PC-3 (cell line): ENCODE measurements at regions of chr5 and their contacts with region 1.

Region 1: GRCh38 chr5:149828161-149828884 is 98.2 kb downstream of the PPARGC1B start:
- DNase-seq: peak; percentile 97
- ATAC-seq: peak; percentile 95
- H3K4me3 ChIP-seq: no peak overlapping the region
- H3K27ac ChIP-seq: no peak overlapping the region
- H3K4me1 ChIP-seq: no peaks in the 10 kb centered on the region
- H3K27me3 ChIP-seq: no peaks in the 10 kb centered on the region
- CTCF ChIP-seq: peak; percentile 99

Region 2: GRCh38 chr5:149636851-149637246 is 191.5 kb before region 1 on chr5:
- CTCF ChIA-PET with region 1: interaction called, 19 read pairs
- POLR2A ChIA-PET with region 1: interaction called, 4 read pairs
- intact Hi-C with region 1: loop called (anchors 1 kb)
- DNase-seq: peak; percentile 98
- ATAC-seq: peak; percentile 85
- H3K4me3 ChIP-seq: no peak overlapping the region
- H3K27ac ChIP-seq: no peak overlapping the region
- H3K4me1 ChIP-seq: peaks cover 26% of the 10 kb centered on the region
- H3K27me3 ChIP-seq: no peaks in the 10 kb centered on the region
- CTCF ChIP-seq: peak; percentile 100

Region 3: DNA sequence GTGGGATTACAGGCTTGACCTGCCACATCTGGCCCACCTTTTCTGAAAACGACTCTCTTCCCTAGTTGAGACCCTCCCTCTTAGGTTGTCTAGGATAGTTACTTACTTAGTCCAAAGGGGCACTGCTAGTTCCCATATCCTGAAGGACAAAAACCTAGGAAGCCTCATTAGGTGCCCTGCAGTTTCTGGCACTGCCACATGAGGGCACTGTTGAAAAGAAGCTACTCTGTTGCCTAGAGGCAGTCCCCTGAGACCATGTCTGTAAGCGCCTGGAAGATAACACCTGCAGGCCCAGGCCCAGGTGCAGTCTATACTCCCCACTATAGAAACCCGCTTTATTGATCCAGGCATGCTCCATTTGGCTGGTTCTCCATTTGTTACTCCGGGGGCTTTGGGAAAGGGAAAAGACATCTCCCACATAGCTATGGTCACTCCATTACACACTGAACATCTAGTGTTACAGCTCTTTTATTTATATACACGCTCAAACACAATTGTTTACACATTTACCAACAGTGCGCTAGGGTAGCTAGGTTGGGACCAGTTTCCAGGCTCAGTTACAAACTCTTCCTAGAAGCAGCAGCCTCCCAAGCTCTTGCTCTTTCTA is 171.6 kb before region 1 on chr5:
- CTCF ChIA-PET with region 1: interaction called, 6 read pairs
- POLR2A ChIA-PET with region 1: no interaction called
- intact Hi-C with region 1: loop called (anchors 1 kb)
- DNase-seq: peak; percentile 83
- ATAC-seq: peak; percentile 52
- H3K4me3 ChIP-seq: no peak overlapping the region
- H3K27ac ChIP-seq: no peak overlapping the region
- H3K4me1 ChIP-seq: no peaks in the 10 kb centered on the region
- H3K27me3 ChIP-seq: no peaks in the 10 kb centered on the region
- CTCF ChIP-seq: peak; percentile 98

Region 4: GRCh38 chr5:149667084-149667828 is 161.1 kb before region 1 on chr5:
- CTCF ChIA-PET with region 1: interaction called, 6 read pairs
- POLR2A ChIA-PET with region 1: no interaction called
- intact Hi-C with region 1: loop called (anchors 1 kb)
- DNase-seq: peak; percentile 79
- ATAC-seq: peak; percentile 47
- H3K4me3 ChIP-seq: no peak overlapping the region
- H3K27ac ChIP-seq: no peak overlapping the region
- H3K4me1 ChIP-seq: no peaks in the 10 kb centered on the region
- H3K27me3 ChIP-seq: no peaks in the 10 kb centered on the region
- CTCF ChIP-seq: peak; percentile 99